Natural killer cell (primary cell): ENCODE measurements at regions of chr17 and their contacts with region 1.

Region 1: DNA sequence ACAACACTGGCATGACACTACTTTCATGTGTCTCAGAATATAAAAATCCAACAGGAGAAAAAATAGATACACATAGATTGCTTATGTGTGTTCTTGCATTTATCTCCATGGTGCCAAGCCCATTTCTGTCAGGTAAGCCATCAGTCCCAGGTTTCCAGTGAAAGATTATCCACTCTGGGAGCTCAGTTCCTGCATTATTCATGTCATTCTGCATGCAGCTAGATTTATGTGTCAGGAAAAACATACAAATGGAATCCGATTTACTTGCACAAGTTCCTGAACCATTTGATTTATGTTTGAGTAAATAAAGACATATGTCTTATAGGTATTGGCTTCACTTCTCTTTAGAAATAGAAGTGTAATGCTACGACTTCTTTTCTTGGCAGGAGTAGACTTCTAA is 569.7 kb downstream of the KCNJ2 start:
- DNase-seq: no peak
- ATAC-seq: no peak
- H3K4me3 ChIP-seq: no peak overlapping the region
- H3K4me3 Mint-ChIP-seq: no peak overlapping the region
- H3K27ac ChIP-seq: no peak overlapping the region
- H3K27ac Mint-ChIP-seq: no peak overlapping the region
- H3K4me1 ChIP-seq: no peaks in the 10 kb centered on the region
- H3K4me1 Mint-ChIP-seq: no peaks in the 10 kb centered on the region
- H3K27me3 ChIP-seq: no peaks in the 10 kb centered on the region
- H3K27me3 Mint-ChIP-seq: no peaks in the 10 kb centered on the region
- CTCF ChIP-seq: no peak

Region 2: DNA sequence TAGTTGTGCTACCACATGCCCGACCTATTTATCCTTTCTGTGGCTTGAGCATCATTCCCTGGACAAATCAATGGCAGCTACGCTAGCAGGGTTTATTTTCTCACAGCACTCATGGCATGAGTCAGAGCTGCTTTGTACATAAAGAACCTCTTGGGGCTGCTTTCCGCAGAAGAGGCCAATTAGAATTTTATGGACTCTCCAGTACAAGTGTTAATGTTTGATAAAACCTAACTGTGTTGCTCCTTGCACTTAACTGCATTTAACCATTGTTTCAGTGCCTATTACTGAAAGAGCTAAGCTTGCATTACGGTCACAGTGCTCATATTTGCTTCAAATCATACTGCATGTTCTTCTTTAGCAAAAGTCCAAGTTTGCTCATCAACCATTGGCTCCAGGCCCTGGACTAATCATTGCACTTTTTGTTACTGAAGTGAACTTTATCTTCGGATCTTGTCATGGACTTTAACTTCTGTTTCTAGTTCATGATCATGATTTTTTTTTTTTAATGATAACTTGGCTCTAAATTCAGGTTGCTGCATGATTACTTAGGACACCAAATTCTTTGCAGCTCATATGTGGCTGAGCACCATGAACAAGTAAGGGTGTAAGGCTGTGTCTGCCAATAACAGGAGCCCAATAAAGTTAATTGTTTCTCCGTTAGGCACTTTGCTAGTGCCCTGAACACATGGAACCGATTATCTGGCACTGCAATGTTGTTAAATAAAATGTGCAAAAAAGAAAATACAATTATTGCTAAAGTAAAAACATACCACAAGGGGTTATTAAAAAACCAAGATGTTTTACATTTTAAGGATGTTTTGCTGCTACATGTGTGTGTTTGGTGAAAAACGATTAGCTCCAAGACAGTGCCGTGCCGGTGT is 77.5 kb before region 1 on chr17:
- intact Hi-C with region 1: loop called (anchors 10 kb)
- DNase-seq: no peak
- ATAC-seq: no peak
- H3K4me3 ChIP-seq: no peak overlapping the region
- H3K4me3 Mint-ChIP-seq: no peak overlapping the region
- H3K27ac ChIP-seq: no peak overlapping the region
- H3K27ac Mint-ChIP-seq: no peak overlapping the region
- H3K4me1 ChIP-seq: no peaks in the 10 kb centered on the region
- H3K4me1 Mint-ChIP-seq: no peaks in the 10 kb centered on the region
- H3K27me3 ChIP-seq: no peaks in the 10 kb centered on the region
- H3K27me3 Mint-ChIP-seq: no peaks in the 10 kb centered on the region
- CTCF ChIP-seq: no peak